Panc1 (cell line): ENCODE measurements at regions of chr7 and their contacts with region 1.

Region 1: DNA sequence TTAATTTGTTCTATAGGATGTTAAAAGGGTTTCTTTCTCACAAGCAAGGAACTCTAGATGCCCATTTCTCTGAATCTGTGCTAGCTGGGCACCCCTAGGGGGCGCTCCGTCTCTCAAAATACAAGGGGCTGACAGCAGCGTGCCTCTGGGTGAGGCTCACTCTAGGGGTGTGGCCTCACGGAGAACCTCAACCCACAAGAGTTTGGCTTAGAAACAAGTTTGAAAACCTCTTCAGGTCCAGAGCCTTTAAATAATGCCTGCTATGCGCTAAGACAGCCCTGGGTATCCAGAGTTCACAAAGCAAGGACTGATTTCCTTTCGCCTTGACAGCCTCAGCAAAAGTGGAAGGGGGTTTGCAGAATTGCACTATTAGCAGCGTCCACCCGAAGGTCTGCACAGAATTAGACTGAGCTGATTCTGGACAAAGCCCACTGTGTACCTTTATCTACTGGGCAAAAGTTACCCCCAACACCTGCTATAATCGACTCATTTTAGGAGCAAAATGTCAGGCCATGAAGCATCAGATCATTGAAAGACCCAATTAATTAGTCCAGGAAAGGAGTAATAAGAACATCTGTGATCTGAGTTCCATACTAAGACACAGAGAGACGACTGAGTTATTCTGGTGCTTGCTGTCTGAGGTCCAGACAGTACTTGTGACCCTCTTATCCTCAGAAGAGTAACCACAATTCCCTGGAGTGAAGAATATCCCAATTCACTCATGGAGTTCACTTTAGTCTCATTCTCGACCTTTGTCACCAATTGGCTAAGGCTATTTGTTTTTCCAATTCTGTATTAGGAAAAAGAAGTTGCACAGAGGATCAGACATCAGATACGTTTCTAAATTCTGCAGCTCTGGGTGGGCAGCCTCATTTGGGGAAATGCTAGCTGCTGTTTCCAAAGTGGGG is 574 bp upstream of the CPED1 start:
- DNase-seq: peak; percentile 63
- ATAC-seq: peak; percentile 96
- H3K4me3 ChIP-seq: peak overlapping the region; percentile 38 to 49
- H3K27ac ChIP-seq: no peak overlapping the region
- H3K4me1 ChIP-seq: no peaks in the 10 kb centered on the region
- H3K27me3 ChIP-seq: peaks cover 36% of the 10 kb centered on the region
- CTCF ChIP-seq: peak; percentile 94

Region 2: GRCh38 chr7:120973849-120974248 is 14.1 kb before region 1 on chr7:
- CTCF ChIA-PET with region 1: no interaction called
- POLR2A ChIA-PET with region 1: no interaction called
- in situ Hi-C with region 1: no loop called
- intact Hi-C with region 1: no loop called
- DNase-seq: no peak
- ATAC-seq: no peak
- H3K4me3 ChIP-seq: no peak overlapping the region
- H3K27ac ChIP-seq: no peak overlapping the region
- H3K4me1 ChIP-seq: no peaks in the 10 kb centered on the region
- H3K27me3 ChIP-seq: no peaks in the 10 kb centered on the region
- CTCF ChIP-seq: no peak

Region 3: GRCh38 chr7:121081327-121081936 is 93.5 kb after region 1 on chr7:
- CTCF ChIA-PET with region 1: no interaction called
- POLR2A ChIA-PET with region 1: no interaction called
- in situ Hi-C with region 1: no loop called
- intact Hi-C with region 1: loop called (anchors 1 kb)
- DNase-seq: peak; percentile 42
- ATAC-seq: peak; percentile 79
- H3K4me3 ChIP-seq: no peak overlapping the region
- H3K27ac ChIP-seq: no peak overlapping the region
- H3K4me1 ChIP-seq: no peaks in the 10 kb centered on the region
- H3K27me3 ChIP-seq: 0 out of 2 replicates have a peak, but pooled peaks cover 2% of the 10 kb centered on the region
- CTCF ChIP-seq: peak; percentile 70; the same call in 1 of the 2 replicates

Region 4: GRCh38 chr7:121107923-121108498 is 120.1 kb after region 1 on chr7:
- CTCF ChIA-PET with region 1: no interaction called
- POLR2A ChIA-PET with region 1: no interaction called
- in situ Hi-C with region 1: no loop called
- intact Hi-C with region 1: loop called (anchors 2 kb)
- DNase-seq: peak; percentile 55
- ATAC-seq: peak; percentile 90
- H3K4me3 ChIP-seq: no peak overlapping the region
- H3K27ac ChIP-seq: no peak overlapping the region
- H3K4me1 ChIP-seq: no peaks in the 10 kb centered on the region
- H3K27me3 ChIP-seq: peaks cover 18% of the 10 kb centered on the region
- CTCF ChIP-seq: peak; percentile 76; the same call in 1 of the 2 replicates

Region 5: DNA sequence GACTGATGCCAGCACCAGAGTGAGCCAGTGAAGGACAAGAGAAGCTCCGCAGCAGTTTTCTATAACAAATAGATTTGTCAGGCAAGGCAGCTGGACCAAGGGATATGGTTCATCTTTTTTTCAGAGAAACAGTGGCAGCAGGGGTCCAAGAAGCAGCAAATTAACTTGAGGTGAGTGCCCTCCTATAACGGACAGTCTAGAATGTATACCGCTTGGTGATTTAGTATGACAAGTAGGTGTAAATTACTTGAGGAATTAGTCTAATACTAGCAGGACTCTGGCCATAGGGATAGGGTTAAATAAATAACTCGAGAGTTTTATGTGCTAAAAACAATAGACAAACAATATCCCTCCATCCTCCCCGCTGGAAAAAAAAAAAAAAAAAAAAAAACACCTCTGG is 187.9 kb after region 1 on chr7:
- CTCF ChIA-PET with region 1: no interaction called
- POLR2A ChIA-PET with region 1: no interaction called
- in situ Hi-C with region 1: no loop called
- intact Hi-C with region 1: no loop called
- DNase-seq: no peak
- ATAC-seq: no peak
- H3K4me3 ChIP-seq: no peak overlapping the region
- H3K27ac ChIP-seq: no peak overlapping the region
- H3K4me1 ChIP-seq: no peaks in the 10 kb centered on the region
- H3K27me3 ChIP-seq: no peaks in the 10 kb centered on the region; the same call in 1 of the 2 replicates
- CTCF ChIP-seq: no peak